Dendritic cell treated with granulocyte-macrophage colony-stimulating factor and Interleukin-4, amounts not matched to agents 40 ng/mL and 50 ng/mL, for 4 days (primary cell): ENCODE measurements at regions of chr6 and their contacts with region 1.

Region 1: DNA sequence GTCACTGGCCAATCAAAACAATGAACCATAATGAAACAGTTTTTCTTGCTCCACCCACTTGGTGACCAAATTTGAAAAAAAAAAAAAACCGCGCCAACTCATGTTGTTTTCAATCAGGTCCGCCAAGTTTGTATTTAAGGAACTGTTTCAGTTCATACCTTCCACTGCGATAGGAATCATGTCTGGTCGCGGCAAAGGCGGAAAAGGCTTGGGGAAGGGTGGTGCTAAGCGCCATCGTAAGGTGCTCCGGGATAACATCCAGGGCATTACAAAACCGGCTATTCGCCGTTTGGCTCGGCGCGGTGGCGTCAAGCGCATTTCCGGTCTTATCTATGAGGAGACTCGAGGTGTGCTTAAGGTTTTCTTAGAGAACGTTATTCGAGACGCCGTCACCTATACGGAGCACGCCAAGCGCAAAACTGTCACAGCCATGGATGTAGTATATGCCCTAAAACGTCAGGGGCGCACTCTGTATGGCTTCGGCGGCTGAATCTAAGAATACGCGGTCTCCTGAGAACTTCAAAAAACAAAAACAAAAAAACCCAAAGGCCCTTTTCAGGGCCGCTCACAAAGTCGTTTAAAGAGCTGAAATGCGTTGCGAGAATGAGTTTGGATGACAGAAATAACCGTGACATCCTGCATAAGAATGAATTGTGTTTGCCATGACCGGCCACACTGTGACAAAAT is 16.7 kb downstream of the HFE start:
- H3K4me3 Mint-ChIP-seq: peak overlapping the region; percentile 81
- H3K27ac Mint-ChIP-seq: peak overlapping the region; percentile 92
- H3K4me1 Mint-ChIP-seq: peaks cover 7% of the 10 kb centered on the region
- H3K27me3 Mint-ChIP-seq: peaks cover 4% of the 10 kb centered on the region

Region 2: GRCh38 chr6:25815194-25815593 is 288.7 kb before region 1 on chr6:
- intact Hi-C with region 1: no loop called
- H3K4me3 Mint-ChIP-seq: no peak overlapping the region
- H3K27ac Mint-ChIP-seq: no peak overlapping the region
- H3K4me1 Mint-ChIP-seq: no peaks in the 10 kb centered on the region
- H3K27me3 Mint-ChIP-seq: peaks cover 2% of the 10 kb centered on the region

Region 3: DNA sequence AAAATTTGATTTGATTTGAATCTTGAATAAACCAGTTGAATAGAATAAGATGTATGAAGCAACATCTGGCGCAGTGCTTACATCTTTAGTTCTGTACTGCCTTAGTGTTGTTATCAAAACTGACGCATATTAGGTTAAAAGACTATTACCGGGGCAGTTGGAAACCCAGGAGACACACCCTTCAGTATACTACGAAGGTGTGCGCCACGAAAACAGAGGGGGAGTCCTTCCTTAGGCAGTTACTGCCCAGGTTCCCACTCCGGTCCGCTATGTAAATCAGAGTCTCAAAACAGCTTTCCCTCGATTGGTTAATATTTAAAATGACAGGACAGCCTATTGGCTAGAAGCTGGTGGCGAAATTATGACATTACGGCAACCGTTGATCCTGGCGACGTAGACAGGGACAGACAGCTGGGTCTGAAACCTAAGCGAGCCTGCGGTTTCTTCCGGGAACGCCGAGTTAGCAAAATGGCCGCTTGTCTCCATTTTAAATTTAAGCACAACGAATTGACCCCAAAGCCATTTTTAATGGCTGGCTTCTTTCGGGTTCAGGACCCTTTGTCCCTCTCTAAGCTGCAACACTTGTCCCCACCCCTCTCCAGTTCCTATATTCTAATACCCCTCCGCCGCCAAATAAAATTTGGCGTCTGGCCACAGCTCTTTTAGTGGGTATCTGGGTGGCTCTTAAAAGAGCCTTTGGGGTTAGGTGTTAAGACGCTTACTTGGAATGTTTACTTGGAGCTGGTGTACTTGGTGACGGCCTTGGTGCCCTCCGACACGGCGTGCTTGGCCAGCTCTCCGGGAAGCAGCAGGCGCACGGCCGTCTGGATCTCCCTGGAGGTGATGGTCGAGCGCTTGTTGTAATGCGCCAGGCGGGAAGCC is 19.1 kb after region 1 on chr6:
- intact Hi-C with region 1: loop called (anchors 1 kb)
- H3K4me3 Mint-ChIP-seq: peak overlapping the region; percentile 95
- H3K27ac Mint-ChIP-seq: peak overlapping the region; percentile 100
- H3K4me1 Mint-ChIP-seq: peaks cover 23% of the 10 kb centered on the region
- H3K27me3 Mint-ChIP-seq: no peaks in the 10 kb centered on the region